PC-3 (cell line): ENCODE measurements at regions of chr1 and their contacts with region 1.

Region 1: DNA sequence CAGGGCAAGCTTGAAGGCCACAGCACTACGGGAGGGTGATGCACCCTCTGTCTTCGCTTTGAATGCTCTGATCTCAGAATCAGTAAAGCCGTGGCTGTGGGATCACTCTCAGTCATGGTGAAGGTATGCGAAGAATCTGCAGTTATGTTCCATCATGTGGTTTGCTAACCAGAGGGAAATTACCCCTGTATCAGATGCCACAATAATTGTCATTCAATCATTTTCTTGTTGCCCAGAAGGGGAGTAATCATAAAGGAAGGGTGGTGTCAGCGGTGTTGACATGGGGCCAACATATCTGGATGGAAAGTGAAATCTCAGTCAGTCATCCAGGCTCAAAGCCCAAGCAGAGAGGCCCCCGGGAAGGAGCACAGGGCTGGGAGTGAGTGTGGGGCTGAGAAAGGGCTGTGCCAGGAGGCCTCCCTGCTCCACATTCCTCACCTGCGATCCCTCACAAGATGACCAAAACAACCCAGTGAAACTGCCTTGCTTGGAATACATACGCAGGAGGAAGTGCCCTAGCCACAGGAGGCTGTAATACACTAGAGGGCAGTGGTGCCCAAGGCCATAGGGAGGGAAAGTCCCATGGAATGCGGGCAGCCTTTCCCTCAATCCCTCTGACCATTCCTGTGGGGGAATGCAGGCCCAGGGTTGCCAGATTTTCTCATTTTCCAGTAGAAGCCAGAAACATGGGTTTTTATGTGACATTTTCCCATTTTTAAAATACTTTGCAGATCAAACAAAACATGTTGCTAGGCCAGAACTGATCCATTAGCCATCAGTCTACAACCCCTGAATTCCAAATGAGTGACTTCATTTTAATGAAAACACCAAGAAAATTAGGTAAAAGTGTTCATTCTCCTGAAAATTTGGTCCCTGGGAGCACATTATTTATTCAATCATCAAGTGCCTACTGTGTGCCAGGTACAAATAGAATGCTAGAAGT is 95.7 kb upstream of the VANGL1 start:
- DNase-seq: peak; percentile 97
- ATAC-seq: peak; percentile 89
- H3K4me3 ChIP-seq: peak overlapping the region; percentile 43; the same call in 1 of the 2 replicates
- H3K27ac ChIP-seq: peak overlapping the region; percentile 86
- H3K4me1 ChIP-seq: peaks cover 28% of the 10 kb centered on the region
- H3K27me3 ChIP-seq: no peaks in the 10 kb centered on the region
- CTCF ChIP-seq: peak; percentile 84

Region 2: DNA sequence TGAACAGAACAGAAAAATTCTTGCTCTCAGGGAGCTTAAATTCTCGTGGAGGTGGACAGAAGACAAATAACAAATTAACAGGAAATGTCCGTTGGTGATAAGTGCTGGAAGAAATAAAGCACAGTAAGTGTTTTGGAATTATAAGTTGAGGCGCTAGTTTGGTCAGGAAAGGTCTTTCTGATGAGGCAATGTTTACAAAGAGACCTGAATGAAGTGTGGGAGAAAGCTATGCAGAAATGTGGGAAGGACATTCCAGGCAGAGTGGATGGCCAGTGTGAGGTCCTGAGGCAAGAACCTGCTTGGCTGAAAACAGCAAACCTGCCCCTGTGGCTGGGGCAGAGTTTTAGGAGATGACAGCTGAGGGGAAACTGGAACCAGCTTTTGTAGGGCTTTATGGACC is 231.3 kb before region 1 on chr1:
- CTCF ChIA-PET with region 1: no interaction called
- POLR2A ChIA-PET with region 1: no interaction called
- intact Hi-C with region 1: loop called (anchors 5 kb)
- DNase-seq: peak; percentile 78
- ATAC-seq: peak; percentile 35
- H3K4me3 ChIP-seq: no peak overlapping the region
- H3K27ac ChIP-seq: no peak overlapping the region
- H3K4me1 ChIP-seq: peaks cover 39% of the 10 kb centered on the region
- H3K27me3 ChIP-seq: no peaks in the 10 kb centered on the region
- CTCF ChIP-seq: no peak

Region 3: GRCh38 chr1:115469703-115470476 is 76.2 kb before region 1 on chr1:
- CTCF ChIA-PET with region 1: no interaction called
- POLR2A ChIA-PET with region 1: no interaction called
- intact Hi-C with region 1: loop called (anchors 2 kb)
- DNase-seq: peak; percentile 86
- ATAC-seq: peak; percentile 76
- H3K4me3 ChIP-seq: peak overlapping the region; percentile 53
- H3K27ac ChIP-seq: peak overlapping the region; percentile 68
- H3K4me1 ChIP-seq: peaks cover 35% of the 10 kb centered on the region
- H3K27me3 ChIP-seq: no peaks in the 10 kb centered on the region
- CTCF ChIP-seq: peak; percentile 98

Region 4: DNA sequence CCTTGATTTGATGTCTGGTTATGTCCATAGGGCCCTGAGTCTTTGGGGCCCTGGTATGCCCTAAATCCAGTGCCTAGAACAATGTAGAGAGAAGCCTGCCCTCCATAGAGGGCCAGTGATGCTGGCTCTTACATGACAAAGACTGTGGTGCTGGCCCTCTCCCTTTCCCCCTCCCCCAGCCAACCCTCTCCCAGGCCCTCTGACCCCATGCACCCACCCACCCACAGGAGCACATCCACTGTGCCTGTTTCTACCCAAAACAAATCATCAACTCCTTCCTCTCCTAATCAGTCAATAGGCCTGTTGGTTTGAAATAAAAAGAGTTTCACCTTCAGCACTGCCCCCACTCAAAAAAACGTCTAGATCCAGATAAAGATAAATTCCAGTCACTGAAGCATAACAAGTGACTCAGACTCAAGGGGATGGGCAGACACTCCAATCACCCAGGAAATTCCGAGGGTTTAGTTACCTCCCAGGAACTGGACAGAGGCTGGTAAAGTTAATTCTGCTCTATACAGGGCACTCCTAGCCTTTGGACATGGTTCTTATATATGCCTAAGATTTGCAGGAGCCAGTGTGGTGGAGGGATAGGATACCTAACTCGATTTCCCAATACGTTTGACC is 49.0 kb before region 1 on chr1:
- CTCF ChIA-PET with region 1: no interaction called
- POLR2A ChIA-PET with region 1: no interaction called
- intact Hi-C with region 1: loop called (anchors 10 kb)
- DNase-seq: peak; percentile 92
- ATAC-seq: peak; percentile 86
- H3K4me3 ChIP-seq: no peak overlapping the region
- H3K27ac ChIP-seq: peak overlapping the region; percentile 79
- H3K4me1 ChIP-seq: peaks cover 56% of the 10 kb centered on the region
- H3K27me3 ChIP-seq: no peaks in the 10 kb centered on the region
- CTCF ChIP-seq: no peak

Region 5: DNA sequence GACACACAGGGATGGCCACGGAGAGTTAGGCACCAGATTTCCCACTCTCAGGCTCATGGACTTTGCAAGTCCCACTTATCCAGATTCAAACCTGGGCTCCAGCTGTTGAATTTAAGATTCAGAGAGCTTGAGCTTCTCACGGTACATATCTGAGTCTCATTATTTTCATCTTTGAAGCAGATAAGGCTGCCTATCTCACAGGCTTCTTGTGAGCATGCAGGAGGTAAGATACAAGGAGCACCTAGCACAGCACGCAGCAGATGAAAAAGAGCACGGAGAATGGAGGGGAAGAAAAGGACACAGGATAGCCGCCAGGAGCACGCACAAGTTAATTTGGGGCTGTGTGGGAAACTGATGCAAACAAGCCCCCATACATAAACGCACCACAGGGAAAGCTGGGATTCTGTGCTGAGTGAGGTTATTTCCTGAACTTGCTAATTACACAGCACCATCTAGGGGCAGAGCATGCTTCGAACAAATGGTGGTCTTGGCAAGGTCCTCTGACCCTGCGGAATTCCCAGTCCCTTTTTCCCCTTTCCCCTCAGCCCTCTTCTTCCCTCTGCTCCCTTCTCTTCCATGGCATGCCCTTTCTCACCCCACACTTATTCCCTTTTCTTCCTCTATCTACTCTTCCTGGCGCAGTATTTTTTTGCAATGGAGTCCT is 39.0 kb before region 1 on chr1:
- CTCF ChIA-PET with region 1: no interaction called
- POLR2A ChIA-PET with region 1: no interaction called
- intact Hi-C with region 1: loop called (anchors 1 kb)
- DNase-seq: peak; percentile 47
- ATAC-seq: peak; percentile 48
- H3K4me3 ChIP-seq: no peak overlapping the region
- H3K27ac ChIP-seq: peak overlapping the region; percentile 31
- H3K4me1 ChIP-seq: peaks cover 52% of the 10 kb centered on the region
- H3K27me3 ChIP-seq: no peaks in the 10 kb centered on the region
- CTCF ChIP-seq: peak; percentile 65

Region 6: DNA sequence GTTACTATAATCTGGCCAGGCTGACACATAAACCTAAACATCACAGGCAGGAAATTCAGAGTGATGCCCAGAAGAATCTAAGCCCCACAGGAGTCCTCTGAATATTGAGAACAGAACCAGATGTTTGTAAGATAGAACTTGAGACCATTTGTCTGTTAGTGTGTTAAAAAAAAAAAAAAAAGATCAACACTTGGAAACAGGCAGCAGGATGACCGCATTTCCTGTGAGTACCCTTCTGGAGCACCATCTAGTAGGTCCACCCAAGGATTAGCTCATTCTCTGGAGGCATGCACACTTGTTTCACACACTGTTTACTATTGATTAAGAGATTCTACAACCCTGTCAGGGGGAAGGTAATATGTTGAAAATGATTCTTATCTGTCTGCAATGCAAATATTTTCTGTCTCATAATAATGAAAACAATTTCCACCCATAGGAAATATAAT is 15.6 kb before region 1 on chr1:
- CTCF ChIA-PET with region 1: no interaction called
- POLR2A ChIA-PET with region 1: no interaction called
- intact Hi-C with region 1: no loop called
- DNase-seq: peak; percentile 53
- ATAC-seq: peak; percentile 80
- H3K4me3 ChIP-seq: no peak overlapping the region
- H3K27ac ChIP-seq: no peak overlapping the region
- H3K4me1 ChIP-seq: peaks cover 19% of the 10 kb centered on the region
- H3K27me3 ChIP-seq: no peaks in the 10 kb centered on the region
- CTCF ChIP-seq: no peak

Region 7: DNA sequence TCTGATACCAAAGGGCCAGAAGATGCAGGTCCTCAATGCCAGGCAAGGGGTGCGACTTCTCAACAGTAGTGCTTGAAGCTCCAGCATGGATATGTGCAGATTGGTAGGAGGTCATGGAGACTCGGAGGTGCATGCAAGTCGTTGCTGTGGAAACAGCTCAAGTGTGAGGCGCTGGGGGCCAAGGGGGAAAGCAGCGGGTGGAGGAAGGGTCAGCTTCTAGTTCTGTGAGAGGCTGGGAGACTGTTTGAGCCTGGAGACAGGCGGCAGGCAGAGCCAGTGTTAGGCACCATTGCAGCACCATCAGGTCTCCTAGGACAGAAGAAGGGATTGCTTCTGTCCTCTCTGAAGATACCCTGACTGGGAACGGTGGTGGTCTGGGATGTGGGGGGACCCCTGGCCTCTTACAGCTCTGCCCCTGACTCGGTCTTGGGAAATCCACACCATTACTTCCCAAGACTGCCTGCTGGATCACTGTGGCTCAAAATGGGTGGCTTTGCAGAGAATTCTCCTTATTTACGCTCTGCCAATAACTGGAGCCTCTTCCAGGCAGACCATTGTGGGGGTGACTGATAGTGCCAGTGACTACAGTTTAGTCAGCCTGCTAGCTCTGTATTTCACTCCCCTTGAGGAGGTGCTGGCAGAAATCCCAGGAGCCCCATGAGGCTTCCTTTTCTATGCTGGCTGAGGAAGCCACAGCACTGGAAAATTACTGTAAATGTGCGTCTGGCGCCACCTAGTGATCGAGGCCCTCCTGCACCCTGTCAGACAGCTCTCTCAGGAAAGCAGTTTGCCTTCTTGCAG is 49.4 kb after region 1 on chr1:
- CTCF ChIA-PET with region 1: interaction called, 3 read pairs
- POLR2A ChIA-PET with region 1: no interaction called
- intact Hi-C with region 1: loop called (anchors 1 kb)
- DNase-seq: peak; percentile 97
- ATAC-seq: peak; percentile 96
- H3K4me3 ChIP-seq: no peak overlapping the region
- H3K27ac ChIP-seq: peak overlapping the region; percentile 1; the same call in 1 of the 2 replicates
- H3K4me1 ChIP-seq: peaks cover 20% of the 10 kb centered on the region
- H3K27me3 ChIP-seq: no peaks in the 10 kb centered on the region
- CTCF ChIP-seq: peak; percentile 96